H1 (cell line): ENCODE measurements at regions of chr1 and their contacts with region 1.

Region 1: GRCh38 chr1:226723657-226724532 is 15.2 kb downstream of the ITPKB start:
- DNase-seq: no peak
- H3K4me3 ChIP-seq: peak overlapping the region in 1 of 4 experiments; percentile 4; a peak in 1 of 8 replicates
- H3K27ac ChIP-seq: no peak overlapping the region
- H3K4me1 ChIP-seq: peaks cover 16 to 23% (median 20%) of the 10 kb centered on the region in 4 experiments
- H3K27me3 ChIP-seq: no peaks in the 10 kb centered on the region; a peak in 1 of 7 replicates
- CTCF ChIP-seq: no peak
- EP300 ChIP-seq: no peak
- POLR2A ChIP-seq: no peak
- RAD21 ChIP-seq: no peak

Region 2: DNA sequence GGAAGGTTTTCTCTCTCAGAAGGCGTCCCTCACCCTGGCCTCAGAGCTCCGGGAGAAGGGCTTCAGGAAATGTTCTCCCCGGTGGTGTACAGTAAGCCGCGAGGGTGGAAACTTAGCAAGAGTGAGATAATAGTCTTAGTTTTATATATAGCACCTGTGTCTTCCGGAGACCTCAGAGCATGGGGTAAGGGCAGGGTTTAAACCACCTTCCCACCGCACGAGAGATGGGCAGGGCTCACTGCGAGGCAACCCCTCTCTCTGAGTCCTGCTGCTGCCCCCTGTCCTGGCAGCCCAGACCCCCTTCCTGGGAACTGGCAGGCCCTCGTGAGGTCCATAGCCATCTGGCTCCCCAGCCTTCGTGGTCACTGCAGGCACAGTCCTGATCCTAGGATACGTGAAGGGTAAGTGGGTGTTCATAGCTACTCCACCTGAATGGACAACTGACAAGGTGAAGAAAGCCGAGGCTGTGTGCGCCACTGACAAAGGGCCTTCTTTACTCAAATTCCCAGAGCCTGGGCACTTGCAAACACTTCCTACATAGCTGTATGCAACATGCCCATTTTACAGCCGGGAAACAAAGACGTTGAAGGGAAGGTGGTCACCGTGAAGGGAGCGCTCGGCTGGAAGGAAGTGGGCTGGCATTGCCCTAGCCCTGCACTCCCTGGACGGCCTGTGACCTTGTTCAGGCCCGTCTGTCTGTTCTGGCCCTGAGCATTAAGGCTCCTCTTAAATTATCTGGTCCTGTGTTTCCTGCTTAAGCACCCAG is 11.7 kb before region 1 on chr1:
- CTCF ChIA-PET with region 1: interaction called, 11 read pairs
- POLR2A ChIA-PET with region 1: no interaction called
- DNase-seq: no peak
- H3K4me3 ChIP-seq: no peak overlapping the region
- H3K27ac ChIP-seq: no peak overlapping the region
- H3K4me1 ChIP-seq: no peaks in the 10 kb centered on the region
- H3K27me3 ChIP-seq: no peaks in the 10 kb centered on the region
- CTCF ChIP-seq: no peak
- EP300 ChIP-seq: no peak
- POLR2A ChIP-seq: no peak
- RAD21 ChIP-seq: no peak